Stomach (tissue), 19 donors: ENCODE measurements at regions of chr3 and their contacts with region 1.

Region 1: GRCh38 chr3:100590114-100590839 is 19.1 kb upstream of the ADGRG7 start:
- DNase-seq: peak; percentile 61 to 90
- H3K4me3 ChIP-seq: no peak overlapping the region
- H3K27ac ChIP-seq: no peak overlapping the region
- H3K4me1 ChIP-seq: peaks cover 0 to 4% (median 2%) of the 10 kb centered on the region in 4 donors
- H3K27me3 ChIP-seq: no peaks in the 10 kb centered on the region
- CTCF ChIP-seq: peak in 5 of 7 experiments; percentile 85 to 92 (median 86)
- EP300 ChIP-seq: no peak
- POLR2A ChIP-seq: no peak

Region 2: DNA sequence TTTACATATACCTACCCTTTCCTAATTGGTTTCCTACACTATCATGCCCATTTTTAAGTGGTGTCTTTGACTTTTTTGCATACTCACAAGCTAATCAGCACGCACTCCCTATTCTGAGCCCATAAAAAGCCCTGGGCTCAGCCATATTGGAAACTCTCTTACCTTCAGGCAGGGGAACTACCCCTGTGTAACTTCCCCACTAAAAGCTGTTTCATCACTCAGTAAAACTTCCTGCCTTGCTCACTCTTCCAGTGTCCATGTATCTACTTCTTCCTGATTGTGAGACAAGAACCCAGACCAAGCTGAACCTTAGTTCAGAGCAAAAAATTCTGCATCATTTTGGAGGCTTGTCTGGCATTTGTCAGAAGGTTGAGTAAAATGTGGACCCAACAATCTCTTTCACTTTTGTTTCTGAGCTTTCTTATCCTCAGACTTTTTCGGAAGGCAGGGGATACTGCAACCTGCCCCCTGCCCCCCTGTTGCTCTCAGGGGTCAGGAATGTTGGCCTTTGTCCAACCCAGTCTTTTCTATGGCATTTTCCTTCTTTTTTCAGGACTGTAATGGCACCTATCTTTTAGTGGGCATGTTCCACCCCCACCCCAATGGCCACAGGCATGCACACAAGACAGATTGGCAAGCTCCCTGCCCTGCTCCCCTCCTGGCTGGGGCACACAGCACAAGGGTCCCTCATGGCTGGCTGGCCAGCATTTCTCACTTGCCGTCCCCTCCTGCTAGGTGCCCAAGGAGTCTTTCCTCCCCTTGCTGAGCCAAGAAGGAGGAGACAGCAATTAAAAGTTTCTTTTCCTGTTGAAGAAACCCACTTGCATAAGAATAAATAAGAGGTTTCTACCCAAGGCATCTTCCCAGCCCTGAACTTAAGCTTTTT is 124.1 kb before region 1 on chr3:
- intact Hi-C with region 1: loop called (anchors 5 kb)
- DNase-seq: no peak
- H3K4me3 ChIP-seq: no peak overlapping the region
- H3K27ac ChIP-seq: no peak overlapping the region
- H3K4me1 ChIP-seq: peaks cover 0 to 8% (median 2%) of the 10 kb centered on the region in 4 donors
- H3K27me3 ChIP-seq: no peaks in the 10 kb centered on the region
- CTCF ChIP-seq: no peak
- EP300 ChIP-seq: no peak
- POLR2A ChIP-seq: no peak